Calu3 (cell line): ENCODE measurements at regions of chr19 and their contacts with region 1.

Region 1: GRCh38 chr19:58543826-58544590 is at the start of gene TRIM28:
- DNase-seq: peak; percentile 100
- H3K4me3 Mint-ChIP-seq: peak within 1 kb of the TSS; percentile 96
- H3K27ac Mint-ChIP-seq: peak within 1 kb of the TSS; percentile 95
- H3K4me1 Mint-ChIP-seq: peaks cover 17% of the 10 kb centered on the region
- H3K27me3 Mint-ChIP-seq: peaks cover 44% of the 10 kb centered on the region
- CTCF ChIP-seq: no peak
- total RNA-seq, gene TRIM28: 558 and 582 TPM in 2 replicates

Region 2: GRCh38 chr19:58499021-58499927 is 44.7 kb before region 1 on chr19:
- CTCF ChIA-PET with region 1: no interaction called
- intact Hi-C with region 1: no loop called
- DNase-seq: peak; percentile 98
- H3K4me3 Mint-ChIP-seq: peak overlapping the region; percentile 75
- H3K27ac Mint-ChIP-seq: peak overlapping the region; percentile 50
- H3K4me1 Mint-ChIP-seq: peaks cover 13% of the 10 kb centered on the region
- H3K27me3 Mint-ChIP-seq: peaks cover 15% of the 10 kb centered on the region
- CTCF ChIP-seq: no peak

Region 3: GRCh38 chr19:58519355-58520256 is 24.4 kb before region 1 on chr19 and contains the start of gene ZBTB45:
- CTCF ChIA-PET with region 1: interaction called, 28 read pairs
- intact Hi-C with region 1: no loop called
- DNase-seq: peak; percentile 94
- H3K4me3 Mint-ChIP-seq: peak within 1 kb of the TSS; percentile 88
- H3K27ac Mint-ChIP-seq: peak within 1 kb of the TSS; percentile 75
- H3K4me1 Mint-ChIP-seq: peaks cover 34% of the 10 kb centered on the region
- H3K27me3 Mint-ChIP-seq: no peaks in the 10 kb centered on the region
- CTCF ChIP-seq: peak; percentile 75
- total RNA-seq, gene ZBTB45: 17.7 and 19.6 TPM in 2 replicates

Region 4: DNA sequence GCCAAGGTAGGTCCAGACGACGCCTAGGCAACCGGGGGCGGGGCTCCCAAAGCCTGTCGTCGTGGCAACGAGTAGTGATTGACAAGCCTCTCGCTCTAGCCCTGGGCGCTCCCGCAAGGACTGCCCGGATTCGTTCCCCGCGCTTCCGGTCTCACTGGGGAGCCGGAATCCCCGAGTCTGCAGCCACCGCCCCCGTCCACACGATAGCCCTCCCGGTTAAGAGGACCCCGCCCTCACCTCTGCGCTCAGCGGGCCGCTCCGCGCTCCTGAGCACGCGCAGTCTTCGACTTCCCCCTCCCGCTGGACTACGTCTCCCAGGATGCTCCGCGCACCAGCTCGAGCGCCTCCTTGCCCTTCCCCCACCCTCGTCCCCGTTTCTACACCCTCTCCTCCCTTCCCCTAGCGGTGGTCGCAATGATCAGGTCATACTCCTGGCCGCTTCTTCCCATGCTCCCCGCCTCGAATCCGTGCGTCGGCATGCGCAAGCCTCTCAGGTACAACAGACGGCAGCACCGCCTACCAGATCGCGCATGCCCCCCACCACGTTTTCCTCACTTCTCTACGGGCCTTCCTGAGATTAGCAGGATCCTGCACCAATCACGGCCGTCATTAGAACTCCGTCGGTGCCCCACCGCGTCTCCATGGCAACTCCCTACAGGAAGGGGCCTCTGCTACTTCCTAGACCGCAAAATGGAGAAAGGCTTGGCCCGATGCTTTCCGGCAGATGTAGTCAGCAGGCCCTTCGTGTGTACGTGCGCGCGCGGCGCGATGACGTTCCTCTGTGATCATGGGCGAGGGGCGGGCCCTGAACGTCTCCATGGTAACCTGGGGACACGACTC is 29.0 kb after region 1 on chr19 and contains the start of gene MZF1:
- CTCF ChIA-PET with region 1: interaction called, 4 read pairs
- intact Hi-C with region 1: loop called (anchors 2 kb)
- DNase-seq: peak; percentile 99
- H3K4me3 Mint-ChIP-seq: peak within 1 kb of the TSS; percentile 88
- H3K27ac Mint-ChIP-seq: peak within 1 kb of the TSS; percentile 98
- H3K4me1 Mint-ChIP-seq: peaks cover 27% of the 10 kb centered on the region
- H3K27me3 Mint-ChIP-seq: no peaks in the 10 kb centered on the region
- CTCF ChIP-seq: no peak
- total RNA-seq, gene MZF1: 31.8 and 33.5 TPM in 2 replicates